Esophagus muscularis mucosa (tissue), 4 donors: ENCODE measurements at regions of chr2 and their contacts with region 1.

Region 1: DNA sequence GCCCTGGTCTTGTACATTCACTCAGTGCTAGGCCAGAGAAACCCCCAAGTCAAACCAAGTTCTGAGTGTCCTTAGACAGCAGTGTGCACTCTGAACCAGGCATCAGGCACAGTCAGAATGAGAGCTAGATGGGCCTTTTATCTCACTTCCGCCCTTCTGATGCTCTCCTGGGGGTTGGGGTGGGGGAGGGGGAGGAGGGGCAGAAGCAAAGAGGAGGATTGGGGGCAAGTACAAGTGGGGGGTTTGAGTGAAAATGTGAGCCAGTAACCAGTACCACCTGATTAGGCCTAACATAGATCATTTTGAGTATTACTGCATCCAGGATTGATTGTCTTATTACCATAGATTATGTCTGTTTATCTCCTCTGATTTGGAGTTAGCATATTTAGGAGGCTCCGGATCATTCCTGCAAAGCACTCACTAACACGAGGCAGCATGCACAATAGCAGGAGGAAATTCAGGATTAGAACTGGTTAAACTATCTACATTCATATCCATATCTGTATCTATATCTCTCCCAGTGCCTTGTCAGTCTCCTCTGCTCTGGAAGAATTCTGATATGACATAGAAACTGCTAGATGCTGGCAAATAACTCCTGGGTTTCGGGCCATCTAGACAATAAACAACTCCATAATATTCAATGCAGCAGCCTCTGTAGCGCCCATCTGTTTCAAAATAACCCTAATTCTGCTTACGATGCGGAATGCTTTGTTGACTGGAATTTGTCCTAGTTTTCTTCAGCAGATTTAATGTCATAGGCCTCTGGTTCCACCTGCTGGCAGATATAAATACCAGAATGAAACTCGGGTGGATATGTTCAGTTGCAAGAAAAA is 149.1 kb downstream of the RHBDD1 start:
- DNase-seq: no peak
- H3K4me3 ChIP-seq: no peak overlapping the region
- H3K27ac ChIP-seq: peak overlapping the region in 2 of 4 donors; percentile 0 to 27
- H3K4me1 ChIP-seq: peaks cover 6 to 15% (median 13%) of the 10 kb centered on the region in 4 donors
- H3K27me3 ChIP-seq: no peaks in the 10 kb centered on the region
- CTCF ChIP-seq: peak; percentile 75 to 78 (median 76)
- EP300 ChIP-seq: no peak
- POLR2A ChIP-seq: no peak

Region 2: DNA sequence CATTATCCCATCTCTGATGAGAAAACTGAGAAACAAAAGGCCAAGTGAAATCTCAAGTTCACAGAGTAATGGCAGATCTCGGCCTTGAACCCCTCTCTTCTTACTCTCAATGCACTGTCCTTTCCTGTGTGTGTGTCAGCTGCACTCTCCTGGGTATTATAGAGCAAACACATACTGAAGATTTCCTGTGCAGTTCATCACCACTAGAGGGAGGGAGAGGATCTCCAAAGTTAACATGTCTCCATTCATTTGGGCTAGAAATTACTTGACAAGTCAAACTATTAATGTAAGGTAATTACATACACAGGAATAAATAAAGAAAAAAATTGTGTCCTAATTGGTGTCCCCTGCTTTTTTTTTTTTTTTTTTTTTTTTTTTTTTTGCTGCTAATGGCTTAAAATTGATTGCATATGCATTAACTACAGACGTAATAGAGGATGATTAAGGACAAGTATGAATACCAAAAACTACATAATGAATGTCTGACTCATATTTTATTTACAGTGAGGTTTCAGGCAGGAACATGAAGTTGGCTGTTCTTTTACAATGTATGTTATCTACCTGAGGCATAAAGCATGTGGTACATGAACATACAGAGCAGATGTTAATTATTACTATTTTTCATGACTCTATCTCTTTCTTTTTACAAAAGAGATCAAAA is 1316.2 kb before region 1 on chr2:
- intact Hi-C with region 1: loop called (anchors 5 kb)
- DNase-seq: no peak
- H3K4me3 ChIP-seq: no peak overlapping the region
- H3K27ac ChIP-seq: no peak overlapping the region
- H3K4me1 ChIP-seq: peaks cover 0 to 11% (median 3%) of the 10 kb centered on the region in 4 donors
- H3K27me3 ChIP-seq: no peaks in the 10 kb centered on the region
- CTCF ChIP-seq: peak; percentile 64 to 79 (median 65)
- EP300 ChIP-seq: no peak
- POLR2A ChIP-seq: no peak

Region 3: GRCh38 chr2:225889446-225889850 is 1095.5 kb before region 1 on chr2:
- intact Hi-C with region 1: loop called (anchors 5 kb)
- DNase-seq: no peak
- H3K4me3 ChIP-seq: no peak overlapping the region
- H3K27ac ChIP-seq: no peak overlapping the region
- H3K4me1 ChIP-seq: peaks cover 0 to 13% (median 8%) of the 10 kb centered on the region in 4 donors
- H3K27me3 ChIP-seq: no peaks in the 10 kb centered on the region
- CTCF ChIP-seq: peak; percentile 77 to 79 (median 77)
- EP300 ChIP-seq: no peak
- POLR2A ChIP-seq: no peak

Region 4: GRCh38 chr2:226835796-226836547 is 149.0 kb before region 1 on chr2 and contains the start of gene RHBDD1:
- intact Hi-C with region 1: loop called (anchors 10 kb)
- DNase-seq: peak; percentile 97
- H3K4me3 ChIP-seq: peak within 1 kb of the TSS; percentile 63 to 86 (median 79)
- H3K27ac ChIP-seq: peak within 1 kb of the TSS; percentile 92 to 98 (median 96)
- H3K4me1 ChIP-seq: peaks cover 14 to 41% (median 35%) of the 10 kb centered on the region in 4 donors
- H3K27me3 ChIP-seq: no peaks in the 10 kb centered on the region
- CTCF ChIP-seq: peak in 1 of 3 experiments; percentile 18
- EP300 ChIP-seq: peak; percentile 32
- POLR2A ChIP-seq: no peak
- total RNA-seq, gene RHBDD1: 18.3 to 24.9 (median 22.2) TPM